ENCODE measurements at regions of chr1 and their contacts with region 1.

Region 1: GRCh38 chr1:232589812-232590743 is 39.9 kb downstream of the SIPA1L2 start:
- DNase-seq: peak; percentile 79
- H3K4me3 ChIP-seq: no peak overlapping the region
- H3K27ac ChIP-seq: no peak overlapping the region
- H3K4me1 ChIP-seq: peaks cover 13% of the 10 kb centered on the region
- H3K27me3 ChIP-seq: no peaks in the 10 kb centered on the region
- CTCF ChIP-seq: no peak
- POLR2A ChIP-seq: no peak

Region 2: GRCh38 chr1:232226197-232226712 is 363.8 kb before region 1 on chr1:
- CTCF ChIA-PET with region 1: no interaction called
- POLR2A ChIA-PET with region 1: no interaction called
- dilution Hi-C with region 1: no loop called
- intact Hi-C with region 1: no loop called
- DNase-seq: peak; percentile 12
- H3K4me3 ChIP-seq: no peak overlapping the region
- H3K27ac ChIP-seq: no peak overlapping the region
- H3K4me1 ChIP-seq: no peaks in the 10 kb centered on the region
- H3K27me3 ChIP-seq: peaks cover 0 to 2% of the 10 kb centered on the region in 2 experiments
- CTCF ChIP-seq: no peak
- POLR2A ChIP-seq: no peak

Region 3: GRCh38 chr1:232524056-232524455 is 66.0 kb before region 1 on chr1:
- CTCF ChIA-PET with region 1: interaction called, 4 read pairs
- POLR2A ChIA-PET with region 1: no interaction called
- dilution Hi-C with region 1: no loop called
- intact Hi-C with region 1: loop called (anchors 5 kb)
- DNase-seq: peak; percentile 78
- H3K4me3 ChIP-seq: no peak overlapping the region
- H3K27ac ChIP-seq: peak overlapping the region; percentile 27
- H3K4me1 ChIP-seq: peaks cover 13% of the 10 kb centered on the region
- H3K27me3 ChIP-seq: no peaks in the 10 kb centered on the region
- CTCF ChIP-seq: no peak
- POLR2A ChIP-seq: no peak

Region 4: DNA sequence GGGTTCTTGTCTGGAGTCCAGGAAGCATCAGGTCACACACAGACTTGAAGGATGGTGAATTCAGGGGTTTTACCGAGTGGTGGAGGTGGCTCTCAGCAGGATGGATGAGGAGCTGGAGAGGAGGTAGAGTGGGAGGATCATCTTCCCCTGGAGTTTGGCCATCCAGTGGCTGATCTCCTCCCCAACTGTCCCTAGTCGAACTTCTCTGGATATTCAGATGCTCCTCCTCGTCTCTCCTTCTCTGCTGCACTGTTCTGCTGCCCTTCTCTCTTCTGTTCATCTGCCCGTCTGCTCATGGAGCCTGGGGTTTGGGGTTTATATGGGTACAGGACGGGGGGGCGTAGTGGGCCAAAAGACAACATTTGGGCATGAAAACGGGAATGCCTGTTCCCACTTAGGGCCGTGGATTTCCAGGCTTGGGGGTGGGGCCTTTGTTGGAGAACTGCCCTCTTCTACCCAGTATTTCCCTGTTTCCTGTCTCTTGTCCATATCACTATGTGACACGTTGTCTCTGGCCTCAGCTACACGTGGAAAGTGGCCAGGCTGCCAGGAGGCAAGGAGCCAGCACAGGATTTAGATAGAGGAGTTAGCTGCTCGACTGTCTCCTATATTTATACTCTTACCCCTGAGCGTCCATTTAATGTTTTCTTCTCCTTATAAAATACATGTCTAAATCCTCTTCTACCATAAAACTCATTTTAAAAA is 36.9 kb before region 1 on chr1:
- CTCF ChIA-PET with region 1: no interaction called
- POLR2A ChIA-PET with region 1: no interaction called
- dilution Hi-C with region 1: no loop called
- intact Hi-C with region 1: loop called (anchors 1 kb)
- DNase-seq: peak; percentile 89
- H3K4me3 ChIP-seq: no peak overlapping the region
- H3K27ac ChIP-seq: no peak overlapping the region
- H3K4me1 ChIP-seq: peaks cover 12% of the 10 kb centered on the region
- H3K27me3 ChIP-seq: no peaks in the 10 kb centered on the region
- CTCF ChIP-seq: no peak
- POLR2A ChIP-seq: no peak

Region 5: DNA sequence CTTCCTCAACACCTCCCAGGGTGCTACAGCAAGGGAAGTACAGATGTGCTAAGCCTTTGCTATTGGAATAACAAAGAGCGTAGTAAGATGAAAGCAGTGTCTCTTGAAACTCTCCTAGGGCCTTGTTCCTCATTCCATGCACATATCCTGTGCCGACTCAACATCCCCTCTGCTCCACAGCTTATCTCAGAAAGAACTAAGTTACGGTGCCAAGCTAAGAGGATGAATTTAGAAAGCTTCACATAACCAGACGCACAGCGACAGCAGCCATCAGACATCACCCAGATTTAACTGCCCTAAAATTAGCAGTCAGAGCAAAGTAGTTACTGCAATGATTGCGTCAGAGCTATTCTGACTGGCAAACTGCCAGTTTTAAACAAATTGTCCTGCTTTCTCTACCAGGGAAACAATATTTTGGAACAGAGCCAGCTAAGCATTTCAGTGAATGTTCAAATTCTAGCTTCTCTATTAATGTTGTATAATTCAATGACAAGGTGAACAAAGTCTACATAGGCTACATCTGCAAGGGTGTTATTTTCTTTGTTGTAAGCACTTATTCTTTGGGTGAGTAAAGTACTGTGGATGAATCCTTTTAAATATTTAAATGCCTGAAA is 30.4 kb after region 1 on chr1:
- CTCF ChIA-PET with region 1: no interaction called
- POLR2A ChIA-PET with region 1: no interaction called
- dilution Hi-C with region 1: no loop called
- intact Hi-C with region 1: loop called (anchors 2 kb)
- DNase-seq: peak; percentile 88
- H3K4me3 ChIP-seq: no peak overlapping the region
- H3K27ac ChIP-seq: no peak overlapping the region
- H3K4me1 ChIP-seq: peaks cover 5% of the 10 kb centered on the region
- H3K27me3 ChIP-seq: no peaks in the 10 kb centered on the region
- CTCF ChIP-seq: no peak
- POLR2A ChIP-seq: no peak

Measured in endothelial cell of umbilical vein (primary cell).